ENCODE measurements at regions of chr9 and their contacts with region 1.

Region 1: DNA sequence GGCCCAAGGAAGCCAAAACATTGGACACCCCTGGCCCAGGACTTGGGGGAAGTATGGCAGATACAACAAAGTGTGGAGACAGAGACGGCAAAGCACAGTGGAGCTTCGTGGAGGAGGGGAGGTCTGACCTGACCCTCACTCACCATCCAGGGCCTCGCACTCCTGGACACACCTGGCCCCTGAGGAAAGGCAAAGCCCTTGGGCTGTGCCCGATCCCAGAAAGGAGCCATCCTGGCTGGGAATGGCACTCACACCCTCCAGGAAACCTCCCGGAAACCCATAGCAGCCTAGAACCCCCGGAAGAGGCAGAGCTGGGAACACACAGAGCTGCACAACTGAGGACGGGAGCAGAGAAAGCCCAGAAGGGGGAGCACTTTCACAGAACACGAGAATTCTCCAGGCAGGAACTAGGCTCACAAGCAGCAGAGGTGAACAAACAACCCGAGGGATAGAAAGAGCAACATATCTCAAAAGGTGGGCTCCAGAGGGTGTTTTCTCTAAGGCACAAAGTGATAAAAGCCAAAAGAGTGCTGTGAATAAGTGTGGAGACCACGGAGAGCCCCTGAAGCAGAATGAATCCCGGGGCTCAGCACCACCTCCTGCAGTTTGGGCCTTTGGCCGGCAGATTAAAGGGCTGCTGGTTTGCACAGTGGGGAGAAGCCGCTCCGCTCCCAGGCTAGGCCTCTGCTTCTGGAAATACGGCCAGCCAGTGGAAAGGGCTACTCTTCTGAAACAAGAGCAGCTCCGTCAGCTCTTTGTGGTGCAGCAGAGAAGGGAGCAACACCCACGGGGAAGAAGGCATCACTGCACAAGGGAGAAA is 108.2 kb downstream of the UBE2R2 start:
- DNase-seq: peak; percentile 51
- H3K4me3 ChIP-seq: no peak overlapping the region
- H3K27ac ChIP-seq: peak overlapping the region in 1 of 2 donors; percentile 27
- H3K4me1 ChIP-seq: no peaks in the 10 kb centered on the region
- H3K27me3 ChIP-seq: no peaks in the 10 kb centered on the region
- CTCF ChIP-seq: peak in 3 of 4 experiments; percentile 39 to 52 (median 52)
- POLR2A ChIP-seq: no peak

Region 2: DNA sequence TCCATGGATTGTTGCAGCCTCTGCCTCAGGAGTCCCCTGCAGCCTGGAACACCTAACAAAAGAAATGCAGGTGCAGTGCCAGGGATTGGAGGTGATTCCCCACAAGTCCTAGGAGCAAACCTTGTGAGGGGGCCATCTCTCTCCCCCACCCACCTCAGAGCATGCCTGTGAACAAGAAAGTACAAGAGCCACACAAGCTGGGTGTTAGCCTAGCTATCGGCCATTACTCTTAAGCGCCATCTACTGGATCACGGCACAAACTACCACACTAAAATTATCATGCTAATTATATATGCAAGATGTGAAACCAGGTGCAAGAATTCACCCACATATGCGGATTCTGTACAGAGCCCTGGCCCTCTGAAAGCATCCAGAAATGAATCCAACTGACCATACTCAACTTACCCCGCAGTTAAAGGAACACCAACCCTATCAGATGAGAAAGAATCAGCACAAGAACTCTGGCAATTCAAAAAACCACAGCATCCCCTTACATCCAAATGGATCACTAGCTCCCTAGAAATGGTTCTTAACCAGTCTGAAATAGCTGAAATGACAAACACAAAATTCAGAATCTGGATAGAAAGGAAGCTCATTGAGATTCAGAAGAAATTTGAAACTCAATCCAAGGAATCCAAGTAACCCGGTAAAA is 146.4 kb before region 1 on chr9:
- intact Hi-C with region 1: no loop called
- DNase-seq: peak; percentile 17
- H3K4me3 ChIP-seq: no peak overlapping the region
- H3K27ac ChIP-seq: no peak overlapping the region
- H3K4me1 ChIP-seq: no peaks in the 10 kb centered on the region
- H3K27me3 ChIP-seq: no peaks in the 10 kb centered on the region
- CTCF ChIP-seq: peak in 2 of 4 experiments; percentile 34 to 63
- POLR2A ChIP-seq: no peak

Region 3: GRCh38 chr9:34025062-34025461 is 99.9 kb after region 1 on chr9:
- intact Hi-C with region 1: loop called (anchors 10 kb)
- DNase-seq: no peak
- H3K4me3 ChIP-seq: no peak overlapping the region
- H3K27ac ChIP-seq: no peak overlapping the region
- H3K4me1 ChIP-seq: no peaks in the 10 kb centered on the region
- H3K27me3 ChIP-seq: no peaks in the 10 kb centered on the region
- CTCF ChIP-seq: no peak
- POLR2A ChIP-seq: no peak

Region 4: DNA sequence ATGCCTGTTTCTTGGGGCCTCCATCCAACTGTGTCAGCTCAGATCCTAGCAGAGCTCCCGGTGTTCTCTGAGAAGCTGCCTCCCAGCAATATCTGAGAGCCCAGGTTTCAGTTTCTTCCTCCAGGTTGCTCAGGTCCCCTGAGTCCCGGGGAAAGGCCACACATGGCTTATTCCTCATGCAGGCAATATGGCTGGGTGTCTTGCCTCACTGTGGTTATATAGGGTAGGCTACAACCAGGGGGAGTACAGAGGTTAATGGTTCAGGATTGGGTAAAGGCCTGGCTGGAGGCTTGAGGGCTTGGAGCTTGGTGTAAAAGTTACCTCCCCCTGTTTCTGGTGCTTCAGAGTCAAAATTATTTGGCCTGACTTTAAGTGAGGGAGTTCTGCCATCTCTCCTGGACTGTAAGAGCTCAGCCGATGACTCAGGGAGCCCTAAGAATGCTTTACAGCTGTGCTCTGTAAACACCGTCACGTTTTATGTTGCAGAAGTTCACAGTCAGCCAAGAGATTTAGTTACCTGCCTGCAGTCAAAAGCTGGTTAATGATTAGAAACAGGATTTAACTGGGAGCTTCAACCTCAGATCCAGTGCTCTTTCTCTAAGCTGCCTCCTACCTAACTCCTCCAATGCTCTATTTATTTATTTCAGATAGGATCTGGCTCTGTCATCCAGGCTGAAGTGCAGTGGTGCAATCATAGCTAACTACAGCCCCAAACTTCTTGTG is 147.8 kb after region 1 on chr9:
- intact Hi-C with region 1: loop called (anchors 2 kb)
- DNase-seq: peak; percentile 82
- H3K4me3 ChIP-seq: no peak overlapping the region
- H3K27ac ChIP-seq: peak overlapping the region; percentile 71 to 73
- H3K4me1 ChIP-seq: peaks cover 9% of the 10 kb centered on the region
- H3K27me3 ChIP-seq: no peaks in the 10 kb centered on the region
- CTCF ChIP-seq: no peak
- POLR2A ChIP-seq: no peak